A549 (cell line): ENCODE measurements at regions of chr20 and their contacts with region 1.

Region 1: DNA sequence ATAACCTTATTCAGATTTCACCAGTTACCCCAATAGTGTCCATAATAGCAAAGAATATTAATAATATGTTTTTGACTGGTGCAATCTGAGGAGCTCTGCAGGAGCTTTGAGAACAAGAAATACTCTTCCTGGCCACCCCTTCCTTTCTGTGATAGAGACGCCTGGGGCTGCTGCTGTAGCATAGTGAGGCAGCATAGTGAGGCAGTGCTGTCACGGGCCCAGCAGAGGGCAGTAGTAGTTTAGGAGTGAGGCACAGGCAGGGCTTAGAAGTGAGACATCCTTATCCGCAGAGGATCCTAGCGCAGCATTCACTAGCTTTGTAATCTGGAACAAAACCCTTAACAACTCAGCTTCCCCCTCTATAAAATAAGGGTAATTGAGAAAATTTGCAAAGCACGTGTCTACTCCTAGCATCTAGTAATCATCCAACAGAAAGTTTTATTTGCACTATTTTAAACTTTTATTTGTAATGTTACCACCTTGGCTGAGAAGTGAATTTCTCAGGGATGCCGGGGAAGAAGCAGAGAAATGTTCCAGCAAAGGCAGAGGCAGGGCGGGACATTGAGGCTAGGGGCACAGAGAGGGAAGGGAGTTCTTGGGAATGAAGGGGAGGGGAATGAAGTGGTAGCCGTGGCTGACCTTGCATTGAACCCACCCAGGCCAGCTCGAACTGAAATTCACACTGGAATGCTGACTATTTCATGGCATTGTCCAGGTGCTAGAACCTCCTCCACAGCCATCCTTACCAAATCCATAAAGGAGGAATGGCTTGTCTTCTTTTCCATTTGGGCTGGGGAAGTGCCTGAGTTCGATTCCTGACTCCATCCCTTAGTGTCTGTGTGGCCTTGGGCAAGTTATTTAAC is 78.8 kb downstream of the CDS2 start:
- DNase-seq: peak; percentile 82 to 92
- ATAC-seq: peak; percentile 98 to 100
- H3K4me3 ChIP-seq: no peak overlapping the region
- H3K27ac ChIP-seq: no peak overlapping the region
- H3K4me1 ChIP-seq: no peaks in the 10 kb centered on the region
- CTCF ChIP-seq: peak; percentile 92
- EP300 ChIP-seq: no peak
- POLR2A ChIP-seq: no peak
- RAD21 ChIP-seq: peak; percentile 88 to 90

Region 2: DNA sequence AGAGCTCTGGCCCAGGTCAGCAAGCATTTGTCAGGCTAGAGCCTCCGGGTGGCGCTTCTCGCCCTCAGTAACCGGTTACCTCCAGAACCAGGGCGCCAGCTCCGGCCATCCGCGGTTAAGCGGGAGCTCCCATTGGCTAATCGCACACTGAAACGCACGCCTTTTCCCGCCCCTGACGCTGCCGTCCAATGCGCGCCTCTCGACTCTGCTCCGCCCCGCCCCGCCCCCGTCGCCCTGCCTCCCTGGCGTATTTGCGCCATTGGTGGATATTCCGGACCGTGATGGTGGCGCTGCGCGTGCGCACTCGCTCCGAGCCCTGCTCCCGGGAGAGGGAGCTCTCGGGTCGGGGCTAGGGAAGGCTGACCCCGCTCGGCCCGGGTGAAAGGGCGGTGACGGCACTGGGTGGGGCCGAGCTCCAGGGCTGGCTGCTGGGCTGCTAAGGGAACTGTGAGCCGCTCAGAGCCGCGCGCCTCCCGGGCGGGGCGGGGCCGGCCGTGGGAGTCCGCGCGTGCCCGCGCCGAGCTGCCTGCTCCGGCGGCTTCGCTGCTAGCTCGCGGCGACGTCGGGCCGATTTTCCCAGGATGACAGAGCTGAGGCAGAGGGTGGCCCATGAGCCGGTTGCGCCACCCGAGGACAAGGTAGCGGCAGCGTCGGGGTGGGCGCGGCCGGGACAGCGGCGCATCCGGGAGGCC is 78.9 kb before region 1 on chr20 and contains the start of gene CDS2:
- CTCF ChIA-PET with region 1: interaction called, 23 read pairs
- POLR2A ChIA-PET with region 1: no interaction called
- DNase-seq: peak; percentile 98 to 100
- ATAC-seq: peak; percentile 92 to 95
- H3K4me3 ChIP-seq: peak within 1 kb of the TSS; percentile 78
- H3K27ac ChIP-seq: peak within 1 kb of the TSS; percentile 85 to 98
- H3K4me1 ChIP-seq: peaks cover 10% of the 10 kb centered on the region; the same call in 2 of the 3 replicates
- CTCF ChIP-seq: peak; percentile 75
- EP300 ChIP-seq: no peak
- POLR2A ChIP-seq: peak; percentile 74
- RAD21 ChIP-seq: peak; percentile 81 to 87
- polyA plus RNA-seq, gene CDS2: 106 and 128 TPM in 2 replicates

Region 3: DNA sequence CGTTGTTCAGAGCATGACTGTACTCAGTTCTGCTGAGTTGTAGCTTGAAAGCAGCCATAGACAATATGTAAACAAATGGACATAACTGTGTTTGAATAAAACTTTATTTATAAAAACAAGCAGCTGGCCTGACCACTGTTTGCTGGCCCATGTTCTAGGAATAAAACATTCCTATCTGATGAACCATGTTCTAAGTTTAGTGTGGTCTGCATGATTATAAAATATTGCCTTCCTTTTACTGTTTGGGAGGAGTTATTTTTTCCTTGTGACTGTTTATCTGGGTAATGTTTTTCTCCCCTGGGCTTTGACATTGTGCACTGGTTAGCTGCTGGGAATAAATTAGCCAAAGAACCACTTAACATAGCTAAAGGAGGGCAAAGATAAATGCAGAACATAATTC is 23.6 kb before region 1 on chr20:
- CTCF ChIA-PET with region 1: interaction called, 25 read pairs
- POLR2A ChIA-PET with region 1: no interaction called
- DNase-seq: peak in 1 of 2 experiments; percentile 22
- ATAC-seq: no peak
- H3K4me3 ChIP-seq: no peak overlapping the region
- H3K27ac ChIP-seq: no peak overlapping the region
- H3K4me1 ChIP-seq: 0 out of 3 replicates have a peak, but pooled peaks cover 10% of the 10 kb centered on the region
- CTCF ChIP-seq: no peak
- EP300 ChIP-seq: no peak
- POLR2A ChIP-seq: no peak
- RAD21 ChIP-seq: no peak

Region 4: GRCh38 chr20:5215672-5216304 is 10.2 kb after region 1 on chr20:
- CTCF ChIA-PET with region 1: interaction called, 192 read pairs
- POLR2A ChIA-PET with region 1: no interaction called
- DNase-seq: no peak
- ATAC-seq: no peak
- H3K4me3 ChIP-seq: no peak overlapping the region
- H3K27ac ChIP-seq: no peak overlapping the region
- H3K4me1 ChIP-seq: no peaks in the 10 kb centered on the region
- CTCF ChIP-seq: no peak
- EP300 ChIP-seq: no peak
- POLR2A ChIP-seq: no peak
- RAD21 ChIP-seq: no peak

Region 5: DNA sequence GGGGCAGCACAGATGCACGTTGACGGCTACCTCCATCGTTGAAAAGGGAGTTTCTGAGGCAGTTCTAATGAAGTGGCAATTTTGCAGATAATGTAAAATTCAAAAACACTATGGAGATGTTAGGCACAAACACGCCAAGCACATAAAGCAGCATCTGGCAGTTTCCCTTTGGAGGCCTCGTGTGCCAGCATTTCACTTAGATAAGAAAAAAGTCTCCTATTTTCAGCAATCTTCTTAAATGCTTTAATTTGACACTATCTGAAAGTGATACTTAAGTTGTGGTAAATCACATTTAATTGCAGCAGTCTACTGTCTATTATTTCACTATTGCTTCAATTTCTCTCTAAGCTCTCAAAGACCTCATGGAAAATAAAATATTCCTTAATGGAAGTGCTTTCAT is 236.5 kb after region 1 on chr20:
- CTCF ChIA-PET with region 1: interaction called, 204 read pairs
- POLR2A ChIA-PET with region 1: no interaction called
- DNase-seq: no peak
- ATAC-seq: no peak
- H3K4me3 ChIP-seq: no peak overlapping the region
- H3K27ac ChIP-seq: no peak overlapping the region
- H3K4me1 ChIP-seq: no peaks in the 10 kb centered on the region
- CTCF ChIP-seq: no peak
- EP300 ChIP-seq: no peak
- POLR2A ChIP-seq: no peak
- RAD21 ChIP-seq: no peak

Region 6: GRCh38 chr20:5463007-5463686 is 257.6 kb after region 1 on chr20:
- CTCF ChIA-PET with region 1: interaction called, 20 read pairs
- POLR2A ChIA-PET with region 1: no interaction called
- DNase-seq: no peak
- ATAC-seq: no peak
- H3K4me3 ChIP-seq: no peak overlapping the region
- H3K27ac ChIP-seq: no peak overlapping the region
- H3K4me1 ChIP-seq: no peaks in the 10 kb centered on the region
- CTCF ChIP-seq: no peak
- EP300 ChIP-seq: no peak
- POLR2A ChIP-seq: no peak
- RAD21 ChIP-seq: no peak

Region 7: DNA sequence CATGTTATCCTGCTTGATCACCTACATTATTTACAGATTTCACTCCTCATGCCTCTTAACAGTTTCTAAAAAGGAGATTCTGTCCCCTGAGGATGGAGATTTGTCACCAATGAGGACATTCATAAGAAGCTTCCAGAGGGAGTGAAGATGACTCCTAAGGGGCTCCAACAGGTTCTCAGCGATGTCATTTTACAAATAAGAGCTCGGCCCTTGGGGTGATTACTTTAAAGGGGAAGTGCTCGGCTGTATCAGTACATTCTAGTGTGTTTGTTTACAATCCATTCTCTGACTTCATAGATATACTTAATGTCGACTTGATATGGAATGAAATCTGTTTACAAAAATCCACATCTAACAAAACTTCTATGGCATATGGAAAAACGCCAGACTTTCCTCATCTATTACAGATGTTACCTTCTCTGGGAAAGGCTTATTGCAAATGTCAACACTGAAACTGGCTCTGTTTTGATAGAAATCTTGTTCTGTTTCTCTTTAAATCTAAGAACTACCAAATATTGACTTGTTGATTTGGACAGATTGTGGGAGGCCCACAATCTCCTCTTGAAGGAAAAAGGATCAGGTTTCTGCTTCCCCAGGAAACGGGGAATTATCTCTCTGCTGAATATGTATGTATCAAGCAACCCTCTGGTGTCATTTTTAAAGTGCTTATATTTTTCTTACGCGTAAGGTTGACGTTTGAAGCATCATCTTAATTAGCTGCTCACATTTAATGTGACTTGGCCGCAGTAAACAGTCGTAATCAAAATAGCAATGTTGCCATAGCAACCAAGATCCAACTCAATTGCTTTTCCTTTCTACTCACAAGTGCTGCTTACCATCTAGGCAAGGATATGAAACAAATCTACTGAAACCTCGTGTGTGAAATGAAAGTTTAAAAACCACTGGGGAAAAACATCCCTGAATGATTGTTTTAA is 640.4 kb after region 1 on chr20:
- CTCF ChIA-PET with region 1: no interaction called
- POLR2A ChIA-PET with region 1: no interaction called
- DNase-seq: peak in 1 of 2 experiments; percentile 39
- ATAC-seq: no peak
- H3K4me3 ChIP-seq: no peak overlapping the region
- H3K27ac ChIP-seq: peak overlapping the region; percentile 8 to 24; a peak in 3 of 6 replicates
- H3K4me1 ChIP-seq: peaks cover 48% of the 10 kb centered on the region
- CTCF ChIP-seq: no peak
- EP300 ChIP-seq: no peak
- POLR2A ChIP-seq: no peak
- RAD21 ChIP-seq: no peak